ENCODE measurements at regions of chr22 and their contacts with region 1.

Region 1: GRCh38 chr22:50525390-50526068 is at the start of gene SCO2:
- DNase-seq: peak; percentile 98
- H3K4me3 ChIP-seq: peak within 1 kb of the TSS; percentile 48 to 81 (median 74)
- H3K27ac ChIP-seq: peak within 1 kb of the TSS; percentile 92 to 94 (median 94)
- H3K4me1 ChIP-seq: peaks cover 0 to 58% (median 39%) of the 10 kb centered on the region in 4 donors
- H3K27me3 ChIP-seq: peaks cover 10 to 19% (median 16%) of the 10 kb centered on the region in 3 donors
- CTCF ChIP-seq: peak in 2 of 4 experiments; percentile 26 to 35
- EP300 ChIP-seq: no peak
- POLR2A ChIP-seq: peak; percentile 26 to 71
- total RNA-seq, gene SCO2: 1.3 to 1.8 (median 1.4) TPM in 3 of 4 donors, not detected in the other

Region 2: GRCh38 chr22:50244420-50245213 is 280.9 kb before region 1 on chr22 and contains the start of gene TUBGCP6:
- intact Hi-C with region 1: loop called (anchors 5 kb)
- DNase-seq: peak; percentile 98
- H3K4me3 ChIP-seq: peak within 1 kb of the TSS; percentile 84 to 94 (median 89)
- H3K27ac ChIP-seq: peak within 1 kb of the TSS; percentile 92 to 97 (median 96)
- H3K4me1 ChIP-seq: peaks cover 3 to 67% (median 46%) of the 10 kb centered on the region in 4 donors
- H3K27me3 ChIP-seq: no peaks in the 10 kb centered on the region
- CTCF ChIP-seq: peak in 3 of 4 experiments; percentile 18 to 29 (median 21)
- EP300 ChIP-seq: peak in 1 of 4 donors; percentile 73
- POLR2A ChIP-seq: peak; percentile 83 to 87
- total RNA-seq, gene TUBGCP6: 23.5 to 67.0 (median 28.2) TPM

Region 3: DNA sequence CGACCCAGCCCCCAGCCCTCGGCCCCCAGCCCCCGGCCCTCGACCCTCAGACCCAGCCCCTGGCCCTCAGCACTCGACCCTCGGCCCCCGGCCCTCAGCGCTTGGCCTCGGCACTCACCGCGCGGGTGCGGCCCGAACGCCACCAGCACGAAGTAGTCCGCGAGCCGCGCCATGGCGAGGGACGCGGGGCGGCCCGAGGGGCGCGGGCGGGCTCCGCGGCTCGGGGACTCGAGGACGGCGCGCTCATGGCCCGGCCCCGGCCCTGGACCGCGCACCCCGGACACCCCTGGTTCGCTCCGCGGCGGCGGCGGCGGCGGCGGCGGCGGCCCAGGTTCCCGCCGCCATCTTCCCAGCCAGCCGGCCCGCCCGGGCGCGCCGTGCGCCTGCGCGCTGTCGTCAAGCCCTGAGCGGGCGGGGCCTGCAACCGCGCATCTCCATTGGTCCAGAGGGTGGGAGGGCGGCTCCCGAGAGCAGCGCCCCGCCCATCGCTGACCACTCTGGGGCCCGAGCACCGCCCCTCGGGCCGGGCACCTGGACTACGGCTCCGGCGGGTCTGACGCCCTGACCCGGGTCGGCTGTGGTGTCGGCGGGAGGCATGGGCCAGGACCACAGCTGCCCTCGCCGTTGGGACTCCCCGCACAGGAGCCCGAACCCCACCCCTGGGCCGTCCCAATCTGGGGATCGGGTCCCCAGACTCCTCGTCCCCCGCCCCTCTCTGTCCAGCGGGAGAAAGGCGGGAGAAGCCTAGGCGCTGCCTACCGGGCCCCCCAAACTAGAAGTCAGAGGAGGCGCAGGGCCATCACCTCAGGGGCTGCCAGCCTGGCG is 50.6 kb before region 1 on chr22 and contains the start of gene SBF1:
- intact Hi-C with region 1: loop called (anchors 1 kb)
- DNase-seq: peak; percentile 95
- H3K4me3 ChIP-seq: peak within 1 kb of the TSS; percentile 62 to 99 (median 90)
- H3K27ac ChIP-seq: peak within 1 kb of the TSS; percentile 82 to 91 (median 87)
- H3K4me1 ChIP-seq: peaks cover 0 to 51% (median 49%) of the 10 kb centered on the region in 4 donors
- H3K27me3 ChIP-seq: peaks cover 0 to 14% (median 4%) of the 10 kb centered on the region in 3 donors
- CTCF ChIP-seq: no peak
- EP300 ChIP-seq: no peak
- POLR2A ChIP-seq: no peak
- total RNA-seq, gene SBF1: 23.2 to 53.7 (median 32.3) TPM

Region 4: DNA sequence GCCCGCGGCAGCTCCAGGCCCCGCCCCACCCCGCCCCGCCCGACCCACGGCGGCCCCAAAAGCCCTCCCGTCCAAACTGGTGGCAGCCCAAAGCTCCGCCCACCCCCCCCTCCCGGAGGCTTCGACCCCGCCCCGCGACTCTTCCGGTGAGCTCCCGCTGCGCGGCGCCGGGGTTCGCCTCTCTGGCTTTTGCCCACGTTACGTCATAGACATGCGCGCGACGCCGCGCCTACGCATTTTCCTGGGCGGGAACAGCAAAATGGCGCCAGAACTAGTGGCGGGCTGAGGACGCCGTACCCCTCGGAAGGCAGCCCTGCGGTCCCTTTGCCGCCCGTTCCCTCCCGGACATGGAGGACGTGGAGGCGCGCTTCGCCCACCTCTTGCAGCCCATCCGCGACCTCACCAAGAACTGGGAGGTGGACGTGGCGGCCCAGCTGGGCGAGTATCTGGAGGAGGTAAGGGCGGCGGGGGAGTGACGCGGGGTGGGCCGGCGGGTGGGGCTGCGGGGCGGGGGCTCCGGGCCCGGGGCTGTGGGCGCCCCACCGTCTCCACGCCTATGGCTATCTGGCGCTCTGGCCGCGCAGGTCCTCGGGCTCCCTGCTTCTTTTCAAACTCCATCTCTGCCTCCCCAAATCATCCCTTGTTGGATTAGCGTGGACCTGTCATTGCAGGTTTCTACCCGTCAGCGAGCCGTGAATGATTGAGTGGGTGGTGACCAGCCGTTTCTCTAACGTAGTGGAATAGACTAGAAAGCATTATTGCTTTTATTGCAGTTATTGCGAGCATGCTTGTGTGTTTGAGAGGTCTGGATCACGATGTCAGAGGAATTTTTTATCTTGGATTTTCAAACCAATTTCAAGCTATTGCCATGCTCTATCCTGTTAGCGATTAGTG is 17.3 kb before region 1 on chr22 and contains the start of gene NCAPH2:
- intact Hi-C with region 1: loop called (anchors 2 kb)
- DNase-seq: peak; percentile 98
- H3K4me3 ChIP-seq: peak within 1 kb of the TSS; percentile 83 to 97 (median 96)
- H3K27ac ChIP-seq: peak within 1 kb of the TSS; percentile 91 to 98 (median 94)
- H3K4me1 ChIP-seq: peaks cover 0 to 39% (median 24%) of the 10 kb centered on the region in 4 donors
- H3K27me3 ChIP-seq: no peaks in the 10 kb centered on the region
- CTCF ChIP-seq: no peak
- EP300 ChIP-seq: no peak
- POLR2A ChIP-seq: peak; percentile 41 to 70
- total RNA-seq, gene NCAPH2: 30.7 to 54.0 (median 35.6) TPM

Region 5: DNA sequence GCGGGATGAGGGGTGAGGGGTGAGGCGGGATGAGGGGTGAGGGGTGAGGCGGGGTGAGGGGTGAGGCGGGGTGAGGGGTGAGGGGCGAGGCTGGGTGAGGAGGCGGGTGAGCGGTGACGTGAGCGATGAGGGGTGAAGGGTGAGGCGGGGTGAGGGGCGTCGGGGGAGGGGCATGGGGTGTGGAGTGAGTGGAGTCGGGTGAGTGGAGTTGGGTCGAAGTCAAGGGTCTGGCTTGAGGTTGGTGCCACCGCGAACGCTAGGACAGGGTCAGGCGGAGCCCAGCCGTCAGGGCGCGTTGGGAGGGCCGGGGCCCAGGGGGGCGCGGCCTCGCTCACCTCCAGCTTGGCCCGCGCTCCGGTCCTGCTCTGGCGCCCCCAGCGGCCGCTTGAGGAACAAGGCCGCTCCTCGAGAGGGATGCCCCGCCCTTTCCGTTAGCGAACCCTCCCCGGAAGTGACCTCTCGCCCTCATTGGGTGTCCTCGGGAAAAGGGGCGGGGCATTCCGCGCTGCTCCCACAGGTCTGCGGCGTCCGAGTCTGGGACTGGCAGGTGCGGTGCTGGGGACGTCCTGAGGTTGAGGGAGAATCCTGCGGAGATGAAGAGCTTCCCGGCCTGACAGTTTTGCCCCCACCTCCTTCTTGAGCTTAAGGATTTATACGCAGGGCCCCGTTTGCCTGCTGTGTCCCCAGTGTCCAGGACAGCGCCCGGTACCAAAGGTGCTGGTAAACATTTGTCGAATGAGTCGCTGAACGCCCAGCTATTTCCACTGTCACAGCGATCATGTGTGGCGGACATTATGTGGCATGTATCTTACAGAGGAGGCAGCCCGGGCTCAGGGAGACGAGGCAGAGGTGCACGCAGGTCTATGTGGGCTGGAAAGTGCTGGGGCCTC is 37.2 kb after region 1 on chr22 and contains the start of gene SYCE3:
- intact Hi-C with region 1: loop called (anchors 5 kb)
- DNase-seq: peak; percentile 98
- H3K4me3 ChIP-seq: peak within 1 kb of the TSS; percentile 29 to 63 (median 55)
- H3K27ac ChIP-seq: peak within 1 kb of the TSS in 3 of 4 donors; percentile 36 to 53 (median 40)
- H3K4me1 ChIP-seq: peaks cover 0 to 11% (median 8%) of the 10 kb centered on the region in 4 donors
- H3K27me3 ChIP-seq: no peaks in the 10 kb centered on the region
- CTCF ChIP-seq: peak; percentile 78 to 97 (median 90)
- EP300 ChIP-seq: no peak
- POLR2A ChIP-seq: peak in 1 of 2 donors; percentile 85
- total RNA-seq, gene SYCE3: not detected

Region 6: DNA sequence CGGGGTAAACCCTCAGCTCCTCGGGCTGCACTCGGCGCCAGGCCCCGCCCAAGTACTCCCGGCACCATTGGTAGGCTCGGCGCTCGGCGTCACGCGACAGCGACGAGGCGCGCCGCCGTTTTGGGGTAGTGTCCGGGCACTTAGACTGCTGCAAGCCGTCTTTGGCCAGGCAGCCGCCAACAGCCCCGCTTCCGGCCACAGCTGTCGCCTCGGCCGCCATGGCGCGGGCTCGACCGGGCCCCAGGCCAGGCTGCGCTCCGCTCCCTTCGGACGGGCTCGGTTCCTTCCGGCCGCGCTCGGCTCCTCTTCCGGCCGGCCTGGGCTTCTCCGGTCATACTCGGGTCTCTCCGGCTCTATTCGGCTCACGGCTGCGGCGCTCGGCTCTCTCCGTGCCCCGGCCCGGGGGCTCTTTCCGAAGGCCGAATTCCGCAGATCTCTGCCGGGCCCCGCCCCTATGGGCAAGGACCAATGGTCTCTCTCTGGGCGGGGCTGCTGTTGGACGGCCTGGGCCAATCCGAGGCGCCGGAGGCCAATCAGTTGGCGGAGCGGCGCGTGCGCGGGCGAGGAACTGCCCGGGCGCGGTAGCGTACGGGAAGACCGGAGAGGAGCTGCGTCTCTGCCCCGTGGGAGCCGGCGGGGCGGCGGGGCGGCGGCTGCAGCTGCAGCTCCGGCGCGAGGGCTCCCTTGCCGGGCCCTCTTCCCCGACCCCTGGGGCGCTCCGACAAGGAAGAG is 57.2 kb after region 1 on chr22 and contains the start of gene CHKB:
- intact Hi-C with region 1: loop called (anchors 1 kb)
- DNase-seq: peak; percentile 99
- H3K4me3 ChIP-seq: peak within 1 kb of the TSS; percentile 85 to 92 (median 89)
- H3K27ac ChIP-seq: peak within 1 kb of the TSS; percentile 97 to 99 (median 98)
- H3K4me1 ChIP-seq: peaks cover 0 to 35% (median 32%) of the 10 kb centered on the region in 4 donors
- H3K27me3 ChIP-seq: peaks cover 9 to 12% (median 11%) of the 10 kb centered on the region in 3 donors
- CTCF ChIP-seq: no peak
- EP300 ChIP-seq: no peak
- POLR2A ChIP-seq: peak; percentile 48 to 63
- total RNA-seq, gene CHKB: 22.0 to 55.1 (median 39.2) TPM

Region 7: GRCh38 chr22:50599786-50600455 is 74.4 kb after region 1 on chr22:
- intact Hi-C with region 1: no loop called
- DNase-seq: peak; percentile 72
- H3K4me3 ChIP-seq: peak overlapping the region in 3 of 4 donors; percentile 34 to 49 (median 46)
- H3K27ac ChIP-seq: no peak overlapping the region
- H3K4me1 ChIP-seq: peaks cover 0 to 16% (median 13%) of the 10 kb centered on the region in 4 donors
- H3K27me3 ChIP-seq: peaks cover 25 to 77% (median 67%) of the 10 kb centered on the region in 3 donors
- CTCF ChIP-seq: no peak
- EP300 ChIP-seq: no peak
- POLR2A ChIP-seq: no peak

Region 8: GRCh38 chr22:50627642-50628542 is 102.4 kb after region 1 on chr22 and contains the start of gene ARSA:
- intact Hi-C with region 1: loop called (anchors 5 kb)
- DNase-seq: peak; percentile 92
- H3K4me3 ChIP-seq: peak within 1 kb of the TSS; percentile 57 to 81 (median 76)
- H3K27ac ChIP-seq: peak within 1 kb of the TSS; percentile 76 to 84 (median 82)
- H3K4me1 ChIP-seq: peaks cover 0 to 20% (median 15%) of the 10 kb centered on the region in 4 donors
- H3K27me3 ChIP-seq: no peaks in the 10 kb centered on the region
- CTCF ChIP-seq: peak in 1 of 4 experiments; percentile 11
- EP300 ChIP-seq: no peak
- POLR2A ChIP-seq: peak in 1 of 2 donors; percentile 11
- total RNA-seq, gene ARSA: 19.3 to 26.3 (median 23.8) TPM

Region 9: DNA sequence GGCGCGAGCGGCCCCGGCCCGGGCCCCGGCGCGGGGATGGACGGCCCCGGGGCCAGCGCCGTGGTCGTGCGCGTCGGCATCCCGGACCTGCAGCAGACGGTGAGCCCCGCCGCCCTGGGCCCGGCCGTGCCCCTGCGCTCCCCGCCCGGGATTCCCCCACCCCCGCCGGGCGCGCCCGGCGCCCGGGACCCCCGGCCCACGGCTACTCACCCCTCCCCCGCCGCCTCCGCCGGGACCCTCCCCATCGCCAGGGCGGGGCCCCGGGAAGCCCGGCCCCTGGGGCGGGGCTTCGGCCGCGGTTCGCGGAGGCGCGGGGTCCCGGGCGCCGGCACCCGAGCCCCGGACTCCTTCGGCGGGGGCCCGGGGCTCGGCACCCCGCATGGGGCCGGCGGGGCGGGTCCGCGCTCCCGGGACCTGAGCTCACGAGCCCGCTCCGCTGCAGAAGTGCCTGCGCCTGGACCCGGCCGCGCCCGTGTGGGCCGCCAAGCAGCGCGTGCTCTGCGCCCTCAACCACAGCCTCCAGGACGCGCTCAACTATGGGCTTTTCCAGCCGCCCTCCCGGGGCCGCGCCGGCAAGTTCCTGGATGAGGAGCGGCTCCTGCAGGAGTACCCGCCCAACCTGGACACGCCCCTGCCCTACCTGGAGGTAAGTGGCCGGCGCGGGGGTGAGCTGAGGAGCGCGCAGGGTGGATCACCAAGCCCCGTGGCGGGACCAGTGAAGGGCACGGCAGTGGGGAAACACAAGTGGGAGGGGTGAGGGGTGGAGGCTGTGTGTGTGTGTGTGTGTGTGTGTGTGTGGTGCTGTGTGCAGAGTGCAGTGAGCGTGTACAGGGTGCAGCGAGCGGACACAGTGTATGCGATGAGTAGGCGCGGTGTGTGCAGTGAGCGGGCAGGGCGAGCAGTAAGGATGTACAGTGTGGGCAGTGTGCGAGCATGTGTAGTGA is 149.3 kb after region 1 on chr22:
- intact Hi-C with region 1: no loop called
- DNase-seq: no peak
- H3K4me3 ChIP-seq: peak overlapping the region in 3 of 4 donors; percentile 28 to 44 (median 41)
- H3K27ac ChIP-seq: no peak overlapping the region
- H3K4me1 ChIP-seq: peaks cover 0 to 18% (median 15%) of the 10 kb centered on the region in 4 donors
- H3K27me3 ChIP-seq: peaks cover 22 to 62% (median 39%) of the 10 kb centered on the region in 3 donors
- CTCF ChIP-seq: no peak
- EP300 ChIP-seq: no peak
- POLR2A ChIP-seq: no peak

Measured in sigmoid colon (tissue), 7 donors.